ENCODE measurements at regions of chr21 and their contacts with region 1.

Region 1: GRCh38 chr21:30268608-30269240 is 14.0 kb downstream of the KRTAP24-1 start:
- DNase-seq: no peak
- H3K4me3 ChIP-seq: no peak overlapping the region
- H3K27ac ChIP-seq: no peak overlapping the region
- H3K4me1 ChIP-seq: no peaks in the 10 kb centered on the region
- H3K27me3 ChIP-seq: no peaks in the 10 kb centered on the region
- CTCF ChIP-seq: peak in 1 of 6 experiments; percentile 23
- POLR2A ChIP-seq: no peak

Region 2: DNA sequence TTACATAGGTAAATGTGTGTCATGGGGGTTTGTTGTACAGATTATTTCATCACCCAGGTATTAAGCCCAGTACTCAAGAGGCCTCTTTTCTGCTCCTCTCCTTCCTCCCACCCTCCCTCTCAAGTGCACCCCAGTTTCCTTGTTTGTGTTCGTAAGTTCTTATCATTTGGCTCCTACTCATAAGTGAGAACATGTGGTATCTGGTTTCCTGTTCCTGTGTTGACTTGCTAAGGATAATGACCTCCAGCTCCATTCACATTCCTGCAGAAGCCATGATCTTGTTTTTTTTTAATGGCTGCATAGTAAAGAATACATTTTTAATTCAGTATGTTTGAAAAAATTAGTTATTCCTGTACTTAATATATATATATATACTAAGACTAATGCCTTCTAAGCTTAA is 209.8 kb before region 1 on chr21:
- intact Hi-C with region 1: loop called (anchors 10 kb)
- DNase-seq: no peak
- H3K4me3 ChIP-seq: no peak overlapping the region
- H3K27ac ChIP-seq: no peak overlapping the region
- H3K4me1 ChIP-seq: no peaks in the 10 kb centered on the region
- H3K27me3 ChIP-seq: no peaks in the 10 kb centered on the region
- CTCF ChIP-seq: no peak
- POLR2A ChIP-seq: no peak

Region 3: GRCh38 chr21:30194701-30195299 is 73.9 kb before region 1 on chr21:
- intact Hi-C with region 1: no loop called
- DNase-seq: no peak
- H3K4me3 ChIP-seq: no peak overlapping the region
- H3K27ac ChIP-seq: no peak overlapping the region
- H3K4me1 ChIP-seq: no peaks in the 10 kb centered on the region
- H3K27me3 ChIP-seq: no peaks in the 10 kb centered on the region
- CTCF ChIP-seq: peak in 5 of 6 experiments; percentile 26 to 65 (median 61)
- POLR2A ChIP-seq: no peak

Region 4: GRCh38 chr21:30206551-30207251 is 62.0 kb before region 1 on chr21:
- intact Hi-C with region 1: no loop called
- DNase-seq: no peak
- H3K4me3 ChIP-seq: no peak overlapping the region
- H3K27ac ChIP-seq: no peak overlapping the region
- H3K4me1 ChIP-seq: no peaks in the 10 kb centered on the region
- H3K27me3 ChIP-seq: no peaks in the 10 kb centered on the region
- CTCF ChIP-seq: no peak
- POLR2A ChIP-seq: no peak